PC-3 (cell line): ENCODE measurements at regions of chr1 and their contacts with region 1.

Region 1: GRCh38 chr1:81717230-81717629 is 83.5 kb upstream of the ADGRL2 start:
- DNase-seq: peak; percentile 93
- ATAC-seq: peak; percentile 96
- H3K4me3 ChIP-seq: no peak overlapping the region
- H3K27ac ChIP-seq: peak overlapping the region; percentile 79
- H3K4me1 ChIP-seq: peaks cover 16% of the 10 kb centered on the region
- H3K27me3 ChIP-seq: no peaks in the 10 kb centered on the region
- CTCF ChIP-seq: no peak

Region 2: DNA sequence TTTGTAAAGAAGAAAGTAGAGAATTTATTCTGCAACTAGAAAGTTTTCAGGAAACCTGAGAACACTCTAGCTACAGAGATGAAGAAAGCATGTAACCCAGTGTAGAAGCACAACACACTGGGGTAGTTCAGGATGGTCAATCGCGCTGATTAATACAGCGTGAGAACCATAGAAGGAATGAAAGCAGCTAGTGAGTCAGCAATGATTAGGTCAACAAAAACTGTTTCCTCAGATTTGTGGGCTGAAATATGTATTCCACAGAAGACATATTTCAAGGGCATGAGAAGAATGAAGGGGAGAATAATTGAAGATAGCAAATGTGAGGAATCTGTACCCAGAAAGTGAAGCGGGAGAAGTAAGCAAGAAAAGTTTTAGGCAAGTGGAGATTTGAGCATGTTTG is 14.3 kb before region 1 on chr1:
- CTCF ChIA-PET with region 1: no interaction called
- POLR2A ChIA-PET with region 1: no interaction called
- intact Hi-C with region 1: loop called (anchors 2 kb)
- DNase-seq: peak; percentile 94
- ATAC-seq: peak; percentile 80
- H3K4me3 ChIP-seq: peak overlapping the region; percentile 50
- H3K27ac ChIP-seq: peak overlapping the region; percentile 97
- H3K4me1 ChIP-seq: peaks cover 73% of the 10 kb centered on the region
- H3K27me3 ChIP-seq: no peaks in the 10 kb centered on the region
- CTCF ChIP-seq: no peak